ENCODE measurements at regions of chr11 and their contacts with region 1.

Region 1: GRCh38 chr11:128824191-128825049 is 42.7 kb downstream of the KCNJ1 start:
- DNase-seq: no peak
- H3K4me3 ChIP-seq: peak overlapping the region; percentile 22 to 50 (median 28)
- H3K27ac ChIP-seq: no peak overlapping the region
- H3K4me1 ChIP-seq: no peaks in the 10 kb centered on the region
- H3K27me3 ChIP-seq: no peaks in the 10 kb centered on the region
- CTCF ChIP-seq: no peak
- POLR2A ChIP-seq: no peak

Region 2: DNA sequence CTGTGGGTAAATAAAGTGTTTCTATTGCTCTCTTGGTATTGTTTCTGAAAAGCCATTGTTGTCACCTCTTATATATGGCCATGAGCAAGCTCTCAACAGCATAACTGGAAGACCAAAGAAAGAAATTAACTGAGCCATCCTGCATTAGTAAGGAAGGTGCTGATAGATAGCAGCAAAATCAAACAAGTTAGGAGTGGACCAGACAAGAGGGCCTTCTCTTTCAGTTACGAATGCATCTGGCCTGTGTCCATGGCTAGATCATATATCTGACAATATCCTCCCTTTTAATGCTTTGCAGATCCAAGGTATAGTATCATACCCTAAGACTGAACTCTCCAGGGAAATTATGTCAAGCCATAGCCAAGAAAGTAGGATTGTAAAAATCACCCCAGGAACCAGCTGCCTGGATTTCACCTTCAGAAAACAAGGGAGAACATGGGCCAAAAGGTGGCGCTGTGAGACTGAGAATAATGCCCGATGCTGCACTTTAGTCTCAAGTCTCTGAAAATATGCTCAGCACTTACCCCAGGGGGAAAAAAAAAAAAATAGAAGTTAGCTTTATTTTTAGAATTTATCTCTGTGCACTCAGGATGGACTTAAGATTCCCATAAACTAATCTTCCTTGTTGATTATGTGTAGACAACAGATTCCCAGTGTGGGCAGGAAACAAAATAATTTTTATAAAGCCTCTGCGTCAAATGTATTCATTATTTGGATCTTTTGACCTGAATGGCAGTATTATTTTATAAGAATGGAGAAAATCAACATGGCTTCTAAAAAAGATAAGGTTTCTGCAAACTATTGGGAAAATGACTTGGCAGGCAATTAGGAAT is 652.2 kb before region 1 on chr11:
- intact Hi-C with region 1: loop called (anchors 10 kb)
- DNase-seq: peak; percentile 76 to 80
- H3K4me3 ChIP-seq: no peak overlapping the region
- H3K27ac ChIP-seq: peak overlapping the region in 1 of 2 donors; percentile 16
- H3K4me1 ChIP-seq: no peaks in the 10 kb centered on the region
- H3K27me3 ChIP-seq: no peaks in the 10 kb centered on the region
- CTCF ChIP-seq: peak; percentile 75 to 80 (median 79)
- POLR2A ChIP-seq: no peak

Region 3: GRCh38 chr11:128874427-128874826 is 50.0 kb after region 1 on chr11:
- intact Hi-C with region 1: no loop called
- DNase-seq: no peak
- H3K4me3 ChIP-seq: no peak overlapping the region
- H3K27ac ChIP-seq: no peak overlapping the region
- H3K4me1 ChIP-seq: no peaks in the 10 kb centered on the region
- H3K27me3 ChIP-seq: peaks cover 0 to 3% of the 10 kb centered on the region in 2 donors
- CTCF ChIP-seq: no peak
- POLR2A ChIP-seq: no peak

Measured in breast epithelium (tissue), 4 donors.